ENCODE measurements at regions of chr3 and their contacts with region 1.

Region 1: DNA sequence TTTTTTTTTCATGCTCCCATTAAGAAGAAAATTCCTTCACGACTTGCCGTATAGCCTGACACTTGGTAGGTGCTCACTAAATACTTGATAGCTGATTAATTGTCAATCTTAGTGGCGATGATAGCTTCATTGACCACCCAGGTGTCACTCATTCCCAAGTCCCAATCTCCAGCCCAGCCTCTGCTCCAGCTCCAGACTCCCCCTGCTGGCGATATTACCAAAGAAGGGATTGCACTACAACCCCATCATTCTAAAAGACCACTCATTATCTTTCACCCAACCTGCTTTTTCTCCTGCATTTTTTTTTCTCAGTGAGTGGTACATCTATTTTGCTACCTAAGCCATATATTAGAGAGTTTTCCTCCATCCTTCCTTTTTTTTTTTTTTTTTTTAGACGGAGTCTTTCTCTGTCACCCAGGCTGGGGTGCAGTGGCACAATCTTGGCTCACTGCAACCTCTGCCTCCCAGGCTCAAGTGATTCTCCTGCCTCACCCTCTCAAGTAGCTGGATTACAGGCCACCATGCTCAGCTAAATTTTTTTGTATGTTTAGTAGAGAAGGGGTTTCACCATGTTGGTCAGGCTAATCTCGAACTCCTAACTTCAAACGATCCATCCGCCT is 19.5 kb upstream of the COMMD2 start:
- DNase-seq: peak in 1 of 2 donors; percentile 33
- H3K4me3 ChIP-seq: no peak overlapping the region
- H3K27ac ChIP-seq: no peak overlapping the region
- H3K4me1 ChIP-seq: no peaks in the 10 kb centered on the region
- H3K27me3 ChIP-seq: no peaks in the 10 kb centered on the region
- CTCF ChIP-seq: peak; percentile 65 to 71

Region 2: DNA sequence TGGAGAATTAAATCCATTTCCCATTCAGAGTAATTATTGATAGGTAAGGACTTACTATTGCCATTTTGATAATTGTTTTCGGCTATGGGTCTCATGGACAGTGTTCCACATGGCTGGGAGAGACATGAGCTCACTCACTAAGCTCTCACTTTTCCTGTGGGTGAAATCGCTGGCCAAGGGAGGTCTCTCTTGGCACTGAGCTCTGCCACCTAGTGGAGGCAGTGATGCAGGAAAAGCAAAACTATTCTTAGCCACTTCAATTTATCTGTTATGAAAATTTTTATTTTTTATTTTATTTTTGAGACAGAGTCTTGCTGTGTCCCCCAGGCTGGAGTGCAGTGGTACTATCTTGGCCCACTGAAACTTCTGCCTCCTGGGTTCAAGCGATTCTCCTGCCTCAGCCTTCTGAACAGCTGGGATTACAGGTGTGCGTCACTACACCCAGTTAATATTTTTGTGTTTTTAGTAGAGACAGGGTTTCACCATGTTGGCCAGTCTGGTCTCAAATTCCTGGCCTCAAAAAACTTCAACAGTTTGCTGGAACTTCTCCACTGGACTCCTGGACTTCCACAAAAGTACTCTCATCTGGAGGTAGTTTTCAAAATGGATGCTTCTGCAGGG is 36.6 kb after region 1 on chr3:
- intact Hi-C with region 1: loop called (anchors 5 kb)
- DNase-seq: peak; percentile 76 to 80
- H3K4me3 ChIP-seq: no peak overlapping the region
- H3K27ac ChIP-seq: no peak overlapping the region
- H3K4me1 ChIP-seq: peaks cover 0 to 16% (median 0%) of the 10 kb centered on the region in 4 donors
- H3K27me3 ChIP-seq: no peaks in the 10 kb centered on the region
- CTCF ChIP-seq: peak; percentile 64 to 82

Measured in tibial artery (tissue), 4 donors.